Mammary epithelial cell (primary cell): ENCODE measurements at regions of chr9 and their contacts with region 1.

Region 1: DNA sequence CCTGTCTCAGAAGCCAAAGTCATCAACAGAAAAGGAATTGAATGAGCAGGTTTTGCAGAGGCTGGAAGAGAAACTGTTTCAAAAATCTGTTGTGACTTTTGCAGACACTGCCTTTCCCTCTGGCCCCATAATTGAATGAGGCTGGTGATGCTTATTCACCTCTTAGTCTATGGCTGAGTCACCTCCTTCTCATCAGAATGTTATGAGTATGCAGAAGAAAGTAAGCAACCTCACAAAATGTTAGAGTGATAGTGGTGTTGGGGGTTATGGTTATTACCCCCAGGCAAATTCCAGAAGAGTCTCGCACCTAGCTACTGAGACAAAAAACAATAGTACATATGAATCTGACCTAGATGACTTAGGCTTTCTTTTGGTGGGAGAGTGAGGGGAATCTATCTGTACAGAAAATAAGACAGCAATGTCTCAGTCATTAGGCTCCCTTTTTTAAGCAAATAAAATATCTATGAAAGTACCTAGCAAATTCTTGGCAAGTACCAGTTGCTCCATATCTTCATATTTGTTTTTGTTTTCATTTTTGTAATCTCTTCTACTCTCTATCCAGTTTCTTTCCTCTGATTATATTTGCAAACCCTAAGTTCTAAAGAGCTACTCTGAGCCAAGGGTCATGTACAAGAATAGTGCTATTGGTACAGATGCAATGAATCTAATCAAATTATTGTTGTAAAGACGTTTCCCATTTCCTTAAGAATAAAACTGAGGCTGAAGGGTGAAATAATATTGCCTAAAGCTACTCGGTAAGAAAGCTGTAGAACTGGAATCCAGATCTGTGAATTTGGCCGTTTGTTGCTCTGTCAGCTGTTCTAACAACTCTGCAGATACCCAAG is 498.1 kb upstream of the TNC start:
- DNase-seq: peak; percentile 96
- H3K4me3 ChIP-seq: no peak overlapping the region
- H3K27ac ChIP-seq: peak overlapping the region; percentile 98
- H3K4me1 ChIP-seq: peaks cover 30% of the 10 kb centered on the region
- H3K27me3 ChIP-seq: no peaks in the 10 kb centered on the region
- CTCF ChIP-seq: no peak

Region 2: DNA sequence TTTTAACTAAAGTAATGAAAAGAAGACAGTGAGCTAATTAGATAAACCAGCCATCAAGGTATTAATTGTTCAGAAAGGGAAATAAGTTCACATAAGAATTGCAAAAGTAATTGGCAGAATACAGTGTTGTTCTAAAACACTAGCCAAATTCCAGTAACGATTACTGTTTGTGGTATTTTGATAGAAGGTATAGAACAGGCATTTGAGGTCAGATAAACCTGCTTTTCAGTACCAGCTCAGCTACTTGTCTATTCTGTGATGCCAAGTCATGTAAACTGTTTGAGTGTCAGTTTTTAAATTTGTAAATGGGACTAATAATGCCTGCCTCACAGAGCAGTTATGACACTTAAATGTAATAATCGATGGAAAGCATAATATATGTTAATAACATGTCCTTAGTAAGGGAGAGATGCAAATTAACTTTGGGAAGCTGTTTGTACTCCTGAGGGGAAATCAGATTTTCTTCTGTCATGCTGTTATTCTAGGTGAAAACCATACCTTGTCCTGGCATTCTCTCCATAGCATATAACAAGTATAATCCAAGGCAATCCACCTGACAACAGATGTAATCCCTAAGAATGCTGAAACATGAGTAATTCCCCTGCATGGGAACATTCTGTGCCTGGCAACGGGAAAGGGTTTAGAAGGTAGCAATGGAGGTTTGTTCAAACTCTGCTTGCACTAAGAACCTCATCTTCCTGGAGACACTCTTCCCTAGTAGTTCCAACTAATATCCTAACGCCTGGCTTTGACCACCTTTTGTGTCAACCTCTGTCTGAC is 28.1 kb after region 1 on chr9:
- CTCF ChIA-PET with region 1: no interaction called
- dilution Hi-C with region 1: no loop called
- in situ Hi-C with region 1: no loop called
- intact Hi-C with region 1: loop called (anchors 2 kb)
- DNase-seq: peak; percentile 26
- H3K4me3 ChIP-seq: no peak overlapping the region
- H3K27ac ChIP-seq: peak overlapping the region; percentile 29
- H3K4me1 ChIP-seq: peaks cover 39% of the 10 kb centered on the region
- H3K27me3 ChIP-seq: no peaks in the 10 kb centered on the region
- CTCF ChIP-seq: no peak

Region 3: GRCh38 chr9:115672477-115673316 is 56.7 kb after region 1 on chr9:
- CTCF ChIA-PET with region 1: interaction called, 3 read pairs
- dilution Hi-C with region 1: no loop called
- in situ Hi-C with region 1: loop called in 1 of 2 experiments (anchors 10 kb)
- intact Hi-C with region 1: loop called (anchors 1 kb)
- DNase-seq: peak; percentile 95
- H3K4me3 ChIP-seq: no peak overlapping the region
- H3K27ac ChIP-seq: peak overlapping the region; percentile 95
- H3K4me1 ChIP-seq: peaks cover 45% of the 10 kb centered on the region
- H3K27me3 ChIP-seq: no peaks in the 10 kb centered on the region
- CTCF ChIP-seq: no peak